Naive thymus-derived CD8-positive, alpha-beta T cell (primary cell): ENCODE measurements at regions of chr14 and their contacts with region 1.

Region 1: DNA sequence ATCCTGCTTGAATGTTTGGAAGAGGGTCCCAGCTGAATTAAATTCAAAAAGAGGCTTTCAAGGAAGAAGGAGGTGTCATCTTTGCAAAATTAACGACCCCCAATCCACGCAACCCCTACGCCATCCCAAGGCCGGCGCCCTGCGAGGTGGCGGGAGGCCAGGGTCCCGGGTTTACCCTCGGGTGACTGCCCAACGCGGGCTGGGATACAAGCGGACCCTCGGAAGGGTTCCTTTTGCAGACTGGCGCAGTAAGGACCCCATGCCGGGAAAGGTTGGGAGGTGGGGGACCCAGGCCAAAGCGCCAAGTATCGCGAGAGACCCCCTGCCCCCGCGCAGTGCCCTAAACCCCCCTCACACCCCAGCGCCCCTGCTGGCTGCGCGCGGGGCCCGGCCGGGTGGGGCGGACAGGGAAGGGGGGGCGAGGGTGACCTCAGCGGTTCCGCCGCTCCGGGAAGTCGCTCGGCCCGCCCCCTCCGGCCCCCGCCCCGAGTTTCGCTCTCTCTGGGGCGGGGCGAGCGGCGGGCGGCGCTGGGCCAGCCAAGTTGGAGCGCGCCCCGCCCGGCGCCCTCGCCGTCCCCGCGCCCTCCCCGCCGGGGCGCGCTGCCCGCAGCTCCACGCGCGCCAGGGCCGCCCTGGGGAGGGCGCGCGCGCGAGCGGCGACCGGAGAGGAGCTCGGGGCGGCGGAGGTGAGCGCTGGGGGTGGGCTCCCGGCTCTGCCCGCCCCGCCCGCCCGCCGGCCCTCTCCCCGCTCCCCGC is 708 bp upstream of the ZBTB42 start:
- DNase-seq: peak; percentile 60 to 91 (median 72)
- ATAC-seq: peak; percentile 65
- H3K4me3 Mint-ChIP-seq: peak overlapping the region; percentile 31 to 90 (median 75)
- H3K27ac Mint-ChIP-seq: peak overlapping the region; percentile 75 to 95 (median 86)
- H3K4me1 Mint-ChIP-seq: peaks cover 10 to 50% (median 43%) of the 10 kb centered on the region in 4 donors
- H3K27me3 Mint-ChIP-seq: no peaks in the 10 kb centered on the region

Region 2: DNA sequence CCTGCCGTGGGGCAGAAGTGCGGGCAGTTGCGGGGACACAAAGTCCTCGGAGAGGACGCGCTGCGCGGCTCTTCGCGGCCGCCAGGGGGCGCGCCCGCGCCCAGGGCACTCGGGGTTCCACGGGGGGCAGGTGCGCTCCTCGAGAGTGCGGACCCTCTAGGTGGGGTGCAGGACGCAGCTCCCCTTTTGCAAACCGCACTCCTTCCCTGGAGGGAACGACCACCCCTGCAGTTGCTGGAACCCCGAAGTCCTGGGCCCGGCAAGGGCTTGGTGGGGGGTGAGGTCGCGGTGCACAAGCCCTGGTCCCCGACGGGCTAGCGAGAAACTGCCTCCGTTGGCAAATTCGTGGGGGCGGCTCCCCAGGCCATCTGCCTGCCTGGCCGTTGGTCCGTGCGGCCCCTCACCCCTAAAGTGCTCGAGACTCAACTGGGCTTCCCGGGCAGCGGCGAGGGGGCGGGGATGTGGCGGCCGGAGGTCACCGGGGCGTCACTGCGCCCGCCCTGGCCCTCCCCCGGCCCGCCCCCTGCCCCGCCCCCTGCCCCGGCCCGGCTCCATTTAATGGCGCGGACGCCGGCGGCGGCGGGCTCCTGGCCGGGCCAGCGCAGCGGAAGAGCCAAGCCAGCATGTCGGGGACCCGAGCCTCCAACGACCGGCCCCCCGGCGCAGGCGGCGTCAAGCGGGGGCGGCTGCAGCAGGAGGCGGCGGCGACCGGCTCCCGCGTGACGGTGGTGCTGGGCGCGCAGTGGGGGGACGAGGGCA is 76.4 kb before region 1 on chr14 and contains the start of gene ADSS1:
- POLR2A ChIA-PET with region 1: no interaction called
- DNase-seq: peak; percentile 26 to 77 (median 62)
- ATAC-seq: peak; percentile 75 to 77
- H3K4me3 Mint-ChIP-seq: peak within 1 kb of the TSS; percentile 39 to 77 (median 60)
- H3K27ac Mint-ChIP-seq: peak within 1 kb of the TSS in 2 of 10 donors; percentile 7 to 29
- H3K4me1 Mint-ChIP-seq: peaks cover 0 to 5% (median 4%) of the 10 kb centered on the region in 4 donors
- H3K27me3 Mint-ChIP-seq: no peaks in the 10 kb centered on the region
- polyA plus RNA-seq, gene ADSS1: 0.61 to 3.1 (median 1.4) TPM

Region 3: GRCh38 chr14:104735830-104736642 is 64.2 kb before region 1 on chr14:
- POLR2A ChIA-PET with region 1: no interaction called
- DNase-seq: no peak
- ATAC-seq: no peak
- H3K4me3 Mint-ChIP-seq: no peak overlapping the region
- H3K27ac Mint-ChIP-seq: peak overlapping the region in 1 of 10 donors; percentile 75
- H3K4me1 Mint-ChIP-seq: peaks cover 0 to 2% (median 0%) of the 10 kb centered on the region in 4 donors
- H3K27me3 Mint-ChIP-seq: no peaks in the 10 kb centered on the region

Region 4: DNA sequence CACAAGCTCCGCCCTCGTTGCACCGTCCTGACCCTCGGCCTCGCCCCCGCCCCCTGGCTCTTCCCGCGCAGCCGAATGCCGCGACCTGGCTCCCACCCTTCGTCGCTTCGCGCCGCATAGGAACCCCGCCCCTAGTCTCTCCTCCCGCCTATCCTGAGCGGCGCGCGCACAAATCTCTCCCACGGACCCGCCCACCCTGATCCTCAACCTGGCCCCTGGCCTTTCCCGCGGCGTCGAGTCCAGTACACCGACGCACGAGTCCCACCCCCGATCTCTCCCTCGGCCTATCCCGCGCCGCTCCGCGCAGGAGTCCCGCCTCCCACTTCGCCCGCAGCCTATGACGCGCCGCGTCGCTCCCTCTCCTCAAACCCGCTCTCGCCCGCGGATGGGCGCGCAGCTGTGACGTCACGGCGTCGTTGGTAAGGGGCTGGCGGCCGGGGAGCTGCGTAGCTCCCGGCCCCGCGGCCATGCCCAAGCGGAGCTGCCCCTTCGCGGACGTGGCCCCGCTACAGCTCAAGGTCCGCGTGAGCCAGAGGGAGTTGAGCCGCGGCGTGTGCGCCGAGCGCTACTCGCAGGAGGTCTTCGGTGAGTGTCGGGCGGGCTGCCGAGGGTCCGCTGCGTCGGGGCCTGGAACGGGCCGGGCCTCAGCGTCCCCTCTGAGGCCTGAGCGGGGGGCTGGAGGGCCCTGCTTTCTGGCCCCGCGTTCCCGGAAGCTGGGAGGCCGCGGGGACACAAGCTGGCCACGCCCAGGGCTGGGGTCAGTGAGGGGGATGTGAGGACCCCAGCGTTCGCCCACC is 47.3 kb before region 1 on chr14 and contains the start of gene SIVA1:
- POLR2A ChIA-PET with region 1: interaction called, 14 read pairs
- DNase-seq: peak; percentile 97 to 100 (median 99)
- ATAC-seq: peak; percentile 89 to 90
- H3K4me3 Mint-ChIP-seq: peak within 1 kb of the TSS; percentile 82 to 96 (median 90)
- H3K27ac Mint-ChIP-seq: peak within 1 kb of the TSS; percentile 75 to 96 (median 95)
- H3K4me1 Mint-ChIP-seq: peaks cover 23 to 55% (median 50%) of the 10 kb centered on the region in 4 donors
- H3K27me3 Mint-ChIP-seq: no peaks in the 10 kb centered on the region
- polyA plus RNA-seq, gene SIVA1: 248 to 297 (median 283) TPM

Region 5: GRCh38 chr14:104768437-104769323 is 31.5 kb before region 1 on chr14:
- POLR2A ChIA-PET with region 1: interaction called, 10 read pairs
- DNase-seq: peak; percentile 77 to 93 (median 90)
- ATAC-seq: peak; percentile 97 to 98
- H3K4me3 Mint-ChIP-seq: no peak overlapping the region
- H3K27ac Mint-ChIP-seq: peak overlapping the region in 2 of 10 donors; percentile 33 to 80
- H3K4me1 Mint-ChIP-seq: peaks cover 0 to 10% (median 5%) of the 10 kb centered on the region in 4 donors
- H3K27me3 Mint-ChIP-seq: no peaks in the 10 kb centered on the region

Region 6: GRCh38 chr14:104810316-104810715 is 10.1 kb after region 1 on chr14:
- POLR2A ChIA-PET with region 1: interaction called, 10 read pairs
- DNase-seq: no peak
- ATAC-seq: no peak
- H3K4me3 Mint-ChIP-seq: no peak overlapping the region
- H3K27ac Mint-ChIP-seq: no peak overlapping the region
- H3K4me1 Mint-ChIP-seq: peaks cover 9 to 28% (median 17%) of the 10 kb centered on the region in 4 donors
- H3K27me3 Mint-ChIP-seq: no peaks in the 10 kb centered on the region